Right ventricle myocardium inferior (tissue), 1 donor: ENCODE measurements at regions of chr10 and their contacts with region 1.

Region 1: DNA sequence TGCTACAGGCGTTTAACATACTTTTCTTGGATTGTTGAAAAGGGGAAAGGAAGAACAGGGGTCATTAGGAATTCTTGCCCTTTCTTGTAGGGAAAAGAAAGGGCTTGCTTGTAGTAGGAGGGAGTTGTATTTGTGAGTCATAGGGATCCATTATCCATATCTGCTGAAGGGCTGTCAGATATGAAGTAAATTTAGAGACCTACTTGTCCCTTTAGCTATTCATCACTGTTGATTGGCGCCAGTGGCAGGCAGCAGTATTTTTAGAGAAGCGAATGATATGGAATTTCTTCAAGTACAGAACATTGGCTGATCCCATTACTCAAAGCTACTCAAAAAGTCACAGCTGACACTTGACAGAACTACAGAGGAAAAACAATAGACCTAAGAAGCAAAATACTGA is 97.7 kb downstream of the CELF2 start:
- DNase-seq: no peak
- ATAC-seq: peak; percentile 58

Region 2: GRCh38 chr10:11145495-11145855 is 30.1 kb after region 1 on chr10:
- intact Hi-C with region 1: loop called (anchors 5 kb)
- DNase-seq: no peak
- ATAC-seq: peak; percentile 72

Region 3: GRCh38 chr10:11286261-11286852 is 171.0 kb after region 1 on chr10:
- intact Hi-C with region 1: no loop called
- DNase-seq: no peak
- ATAC-seq: peak; percentile 18